ENCODE measurements at regions of chr1 and their contacts with region 1.

Region 1: GRCh38 chr1:113042285-113043143 is 30.5 kb upstream of the LRIG2 start:
- DNase-seq: peak; percentile 67 to 77
- ATAC-seq: peak; percentile 77

Region 2: DNA sequence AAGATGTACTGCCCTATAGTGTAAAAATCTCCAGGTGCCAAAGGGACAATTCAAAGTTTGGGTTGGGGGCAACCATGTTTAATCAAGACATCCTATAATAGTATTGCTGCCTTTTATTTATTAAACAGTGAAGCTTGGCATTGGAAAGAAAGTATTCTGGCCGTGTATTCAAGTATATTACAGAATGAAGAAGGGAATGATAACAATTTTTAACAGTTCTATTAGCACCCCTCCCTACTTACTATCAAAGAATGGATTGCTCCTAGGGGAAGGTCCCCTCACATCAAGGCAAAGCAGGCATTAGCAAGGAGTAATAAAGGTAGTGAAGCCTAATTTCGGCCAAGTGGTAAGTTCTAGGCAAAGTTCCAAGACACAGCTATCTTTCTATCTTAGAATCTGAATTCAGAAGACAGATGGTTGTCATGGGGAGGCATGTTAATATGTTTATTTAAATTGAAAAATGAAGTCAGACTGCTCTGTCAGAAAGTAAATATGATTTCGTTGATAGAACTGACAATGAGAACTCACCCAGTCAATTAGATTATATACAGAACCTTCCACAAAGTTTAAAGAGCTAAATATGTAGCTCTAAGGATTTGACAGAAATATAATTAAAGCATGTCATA is 448.1 kb before region 1 on chr1:
- intact Hi-C with region 1: no loop called
- DNase-seq: no peak
- ATAC-seq: no peak

Region 3: GRCh38 chr1:112715264-112716053 is 327.1 kb before region 1 on chr1 and contains the start of gene PPM1J:
- intact Hi-C with region 1: loop called in 1 of 2 experiments (anchors 10 kb)
- DNase-seq: peak; percentile 98 to 100
- ATAC-seq: peak; percentile 83
- total RNA-seq, gene PPM1J: 1.1 to 1.2 TPM

Region 4: GRCh38 chr1:112809253-112809684 is 233.2 kb before region 1 on chr1:
- intact Hi-C with region 1: loop called in 1 of 2 experiments (anchors 5 kb)
- DNase-seq: peak; percentile 53 to 89
- ATAC-seq: peak; percentile 92

Region 5: GRCh38 chr1:112881742-112882127 is 160.8 kb before region 1 on chr1:
- intact Hi-C with region 1: loop called in 1 of 2 experiments (anchors 2 kb)
- DNase-seq: peak; percentile 47 to 57
- ATAC-seq: peak; percentile 79

Region 6: GRCh38 chr1:113088972-113089371 is 46.5 kb after region 1 on chr1:
- intact Hi-C with region 1: no loop called
- DNase-seq: no peak
- ATAC-seq: no peak